Left ventricle myocardium superior (tissue), 1 donor: ENCODE measurements at regions of chr10 and their contacts with region 1.

Region 1: DNA sequence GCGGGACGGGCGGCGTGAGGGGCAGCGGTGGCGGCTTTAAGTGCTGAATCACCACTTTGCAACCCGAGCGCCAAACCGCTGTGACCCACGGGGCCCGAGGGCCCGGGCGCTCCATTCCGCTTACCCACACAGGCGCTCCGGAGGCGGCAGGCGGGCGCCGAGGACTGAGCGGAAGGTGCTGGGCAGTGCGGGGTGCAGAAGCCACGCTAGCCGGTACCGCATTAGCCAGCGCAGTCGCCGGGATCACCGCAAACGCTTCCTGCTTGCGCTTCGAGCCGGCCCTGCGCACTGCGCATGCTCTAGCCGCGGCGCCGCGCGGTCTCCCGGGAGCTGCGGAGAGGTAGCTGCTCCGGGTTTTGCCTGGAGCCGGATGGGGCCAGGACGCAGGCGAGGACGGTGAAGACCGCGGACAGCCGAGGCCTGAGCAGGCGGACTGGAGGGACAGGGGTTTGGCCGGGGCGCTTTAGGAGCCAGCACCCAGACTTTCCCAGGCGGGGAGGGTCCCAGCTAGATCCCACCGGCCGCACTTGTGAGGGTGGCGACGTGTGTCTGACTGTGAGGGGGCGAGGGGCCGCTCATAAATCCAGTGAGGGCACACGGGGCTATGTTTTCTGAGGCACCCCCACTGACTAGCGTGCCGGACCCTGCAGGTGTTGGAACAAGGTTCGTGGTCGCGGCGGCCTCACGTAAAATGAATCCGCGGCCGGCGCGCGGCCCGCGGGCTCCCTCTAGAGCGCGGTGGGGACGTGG is at the start of gene IDE:
- DNase-seq: peak; percentile 94
- ATAC-seq: peak; percentile 97
- total RNA-seq, gene IDE: 47.8 TPM

Region 2: GRCh38 chr10:92517034-92517655 is 56.8 kb before region 1 on chr10:
- intact Hi-C with region 1: loop called (anchors 10 kb)
- DNase-seq: no peak
- ATAC-seq: peak; percentile 81

Region 3: DNA sequence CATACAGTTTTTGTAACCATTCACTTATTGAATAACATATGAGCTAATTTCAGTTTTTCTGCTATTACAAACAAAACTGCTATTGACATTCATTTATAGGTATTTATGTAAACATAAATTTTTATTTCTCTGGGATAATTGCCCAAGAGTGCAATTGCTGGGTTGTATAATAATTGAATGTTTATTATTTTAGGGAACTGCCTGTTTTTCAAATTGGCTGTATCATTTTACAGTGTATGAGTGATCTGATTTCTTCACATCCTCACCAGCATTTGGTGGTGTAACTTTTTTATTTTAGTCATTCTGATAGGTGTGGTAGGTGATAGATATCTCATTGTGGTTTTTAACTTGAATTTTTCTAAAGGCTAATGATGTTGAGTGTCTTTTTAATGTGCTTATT is 45.4 kb after region 1 on chr10:
- intact Hi-C with region 1: no loop called
- DNase-seq: no peak
- ATAC-seq: no peak